ENCODE measurements at regions of chr6 and their contacts with region 1.

Region 1: GRCh38 chr6:162621246-162621645 is 106.3 kb downstream of the PRKN start:
- DNase-seq: no peak
- ATAC-seq: no peak
- H3K4me3 ChIP-seq: no peak overlapping the region
- H3K27ac ChIP-seq: no peak overlapping the region
- H3K4me1 ChIP-seq: no peaks in the 10 kb centered on the region
- H3K27me3 ChIP-seq: no peaks in the 10 kb centered on the region
- CTCF ChIP-seq: no peak

Region 2: GRCh38 chr6:162576009-162576408 is 45.2 kb before region 1 on chr6:
- CTCF ChIA-PET with region 1: interaction called, 14 read pairs
- POLR2A ChIA-PET with region 1: no interaction called
- in situ Hi-C with region 1: no loop called
- intact Hi-C with region 1: no loop called
- DNase-seq: no peak
- ATAC-seq: no peak
- H3K4me3 ChIP-seq: no peak overlapping the region
- H3K27ac ChIP-seq: no peak overlapping the region
- H3K4me1 ChIP-seq: no peaks in the 10 kb centered on the region
- H3K27me3 ChIP-seq: no peaks in the 10 kb centered on the region
- CTCF ChIP-seq: no peak

Region 3: GRCh38 chr6:162882809-162883481 is 261.7 kb after region 1 on chr6:
- CTCF ChIA-PET with region 1: no interaction called
- POLR2A ChIA-PET with region 1: no interaction called
- in situ Hi-C with region 1: no loop called
- intact Hi-C with region 1: no loop called
- DNase-seq: no peak
- ATAC-seq: no peak
- H3K4me3 ChIP-seq: no peak overlapping the region
- H3K27ac ChIP-seq: no peak overlapping the region
- H3K4me1 ChIP-seq: no peaks in the 10 kb centered on the region
- H3K27me3 ChIP-seq: no peaks in the 10 kb centered on the region
- CTCF ChIP-seq: no peak